GM10248 (cell line): ENCODE measurements at regions of chr2 and their contacts with region 1.

Region 1: DNA sequence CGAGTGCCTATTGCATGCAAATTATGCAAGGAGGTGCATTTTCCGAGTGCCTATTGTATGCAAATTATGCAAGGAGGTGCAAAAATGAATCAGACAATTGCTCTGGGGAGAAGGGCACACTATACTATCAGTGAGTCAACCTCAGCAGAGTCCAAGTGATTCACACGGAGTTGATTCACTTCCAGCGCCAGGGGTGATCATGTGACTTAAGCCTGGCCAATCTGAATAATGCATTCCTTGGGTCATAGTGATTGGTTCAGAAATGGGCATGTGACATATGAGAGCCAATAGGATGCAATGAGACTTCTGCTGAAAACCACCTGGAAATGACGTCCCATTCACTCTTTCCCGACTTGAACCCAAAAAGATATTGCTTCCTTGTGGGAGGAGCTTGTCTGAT is 152.2 kb downstream of the DAW1 start:
- DNase-seq: no peak
- CTCF ChIP-seq: no peak

Region 2: GRCh38 chr2:228039752-228040534 is 16.3 kb after region 1 on chr2:
- CTCF ChIA-PET with region 1: interaction called, 15 read pairs
- POLR2A ChIA-PET with region 1: no interaction called
- DNase-seq: peak; percentile 18
- CTCF ChIP-seq: peak; percentile 68